Activated naive CD4-positive, alpha-beta T cell treated with anti-CD3 and anti-CD28 coated beads for 36 hours (primary cell): ENCODE measurements at regions of chr10 and their contacts with region 1.

Region 1: GRCh38 chr10:28250782-28251181 is 52.1 kb downstream of the MPP7 start:
- DNase-seq: no peak
- H3K4me3 Mint-ChIP-seq: no peak overlapping the region
- H3K27ac Mint-ChIP-seq: no peak overlapping the region
- H3K4me1 Mint-ChIP-seq: peaks cover 47% of the 10 kb centered on the region
- H3K27me3 Mint-ChIP-seq: no peaks in the 10 kb centered on the region

Region 2: DNA sequence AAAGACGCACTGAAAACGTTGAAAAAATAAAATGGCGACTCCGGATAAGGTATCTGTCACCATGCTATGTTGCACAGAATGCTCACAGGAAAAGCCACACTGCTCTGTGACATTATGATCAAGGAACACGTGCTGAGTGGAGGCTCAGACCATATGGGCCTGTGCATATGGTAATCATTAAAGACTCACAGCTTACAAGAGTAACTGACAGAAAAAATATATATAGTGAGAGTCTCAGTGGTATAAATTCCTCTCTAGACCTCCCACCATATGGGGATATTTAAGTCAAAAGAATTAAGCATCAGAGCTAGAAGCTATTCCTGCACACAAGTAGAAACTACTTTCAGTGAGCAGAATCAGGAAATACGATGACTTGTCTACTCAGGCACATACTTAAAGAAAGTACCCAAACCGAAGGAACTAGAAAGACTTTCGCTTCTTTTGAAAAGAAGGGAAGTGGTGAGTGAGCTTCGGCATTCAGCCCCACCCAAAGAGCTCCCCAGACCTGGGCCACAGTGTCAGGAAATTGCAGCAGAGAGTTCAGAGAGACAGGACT is 117.2 kb after region 1 on chr10:
- CTCF ChIA-PET with region 1: interaction called, 4 read pairs
- intact Hi-C with region 1: loop called (anchors 1 kb)
- DNase-seq: peak; percentile 78
- H3K4me3 Mint-ChIP-seq: peak overlapping the region; percentile 49
- H3K27ac Mint-ChIP-seq: peak overlapping the region; percentile 91
- H3K4me1 Mint-ChIP-seq: peaks cover 44% of the 10 kb centered on the region
- H3K27me3 Mint-ChIP-seq: no peaks in the 10 kb centered on the region

Region 3: GRCh38 chr10:28393966-28394568 is 143.3 kb after region 1 on chr10:
- CTCF ChIA-PET with region 1: interaction called, 99 read pairs
- intact Hi-C with region 1: loop called (anchors 1 kb)
- DNase-seq: peak; percentile 83
- H3K4me3 Mint-ChIP-seq: no peak overlapping the region
- H3K27ac Mint-ChIP-seq: no peak overlapping the region
- H3K4me1 Mint-ChIP-seq: peaks cover 4% of the 10 kb centered on the region
- H3K27me3 Mint-ChIP-seq: no peaks in the 10 kb centered on the region

Region 4: DNA sequence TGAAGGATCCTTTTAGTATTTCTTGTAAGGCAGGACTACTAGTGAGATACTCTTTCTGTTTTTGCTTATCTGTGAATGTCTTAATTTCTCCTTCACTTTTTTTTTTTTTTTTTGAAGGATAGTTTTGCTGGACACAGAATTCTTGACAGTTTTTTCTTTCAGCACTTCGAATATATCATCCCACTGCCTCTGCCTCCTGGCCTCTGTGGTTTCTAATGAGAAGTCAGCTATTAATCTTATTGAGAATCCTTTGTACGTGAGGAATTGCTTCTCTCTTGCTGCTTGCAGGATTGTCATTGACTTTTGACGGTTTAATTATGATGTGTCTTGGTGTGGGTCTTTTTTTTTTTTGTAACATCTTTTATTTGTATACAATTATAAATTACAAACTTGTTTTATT is 269.6 kb after region 1 on chr10:
- CTCF ChIA-PET with region 1: no interaction called
- intact Hi-C with region 1: no loop called
- DNase-seq: no peak
- H3K4me3 Mint-ChIP-seq: no peak overlapping the region
- H3K27ac Mint-ChIP-seq: no peak overlapping the region
- H3K4me1 Mint-ChIP-seq: peaks cover 2% of the 10 kb centered on the region
- H3K27me3 Mint-ChIP-seq: no peaks in the 10 kb centered on the region